Right ventricle myocardium inferior (tissue), 1 donor: ENCODE measurements at regions of chr1 and their contacts with region 1.

Region 1: GRCh38 chr1:161209790-161210409 is 5.2 kb upstream of the FCER1G start:
- DNase-seq: peak; percentile 87
- ATAC-seq: peak; percentile 44

Region 2: GRCh38 chr1:160884579-160884978 is 325.3 kb before region 1 on chr1:
- intact Hi-C with region 1: no loop called
- DNase-seq: no peak
- ATAC-seq: no peak

Region 3: GRCh38 chr1:161382214-161383019 is 172.5 kb after region 1 on chr1:
- intact Hi-C with region 1: loop called (anchors 5 kb)
- DNase-seq: no peak
- ATAC-seq: peak; percentile 79